H1 (cell line): ENCODE measurements at regions of chr1 and their contacts with region 1.

Region 1: DNA sequence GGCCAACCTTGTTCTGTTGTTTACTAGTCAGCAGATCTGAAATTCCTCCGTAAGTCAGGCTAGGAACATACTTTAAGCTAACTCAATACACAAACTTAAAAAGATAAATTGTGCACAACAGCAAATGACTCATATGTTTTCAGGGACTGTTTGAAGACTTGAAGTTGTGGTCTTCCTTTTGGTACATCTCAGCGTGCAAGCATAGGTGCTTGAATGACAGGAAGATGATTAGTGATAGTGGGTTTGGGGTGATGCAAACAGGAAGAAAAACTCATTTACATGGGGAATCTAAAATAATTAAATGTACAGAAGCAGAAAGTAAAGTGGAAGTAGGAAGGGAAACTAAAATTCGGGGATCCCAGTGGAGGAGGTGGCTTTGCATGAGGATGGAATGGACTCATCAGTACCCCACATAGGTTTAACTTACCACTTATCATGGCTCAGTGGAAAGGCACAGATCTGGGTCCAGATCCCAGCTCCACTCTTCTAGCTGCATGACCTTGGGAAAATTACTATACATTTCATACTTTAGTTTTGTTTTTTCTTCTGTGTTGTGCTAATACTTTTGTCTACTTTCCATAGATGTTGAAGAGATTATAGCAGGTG is 122.3 kb downstream of the XCL2 start:
- DNase-seq: no peak
- H3K4me3 ChIP-seq: no peak overlapping the region
- H3K27ac ChIP-seq: no peak overlapping the region
- H3K4me1 ChIP-seq: no peaks in the 10 kb centered on the region
- H3K27me3 ChIP-seq: no peaks in the 10 kb centered on the region
- CTCF ChIP-seq: no peak
- EP300 ChIP-seq: no peak
- POLR2A ChIP-seq: no peak
- RAD21 ChIP-seq: no peak

Region 2: GRCh38 chr1:168373869-168374268 is 47.6 kb before region 1 on chr1:
- CTCF ChIA-PET with region 1: no interaction called
- POLR2A ChIA-PET with region 1: no interaction called
- DNase-seq: no peak
- H3K4me3 ChIP-seq: no peak overlapping the region
- H3K27ac ChIP-seq: no peak overlapping the region
- H3K4me1 ChIP-seq: no peaks in the 10 kb centered on the region
- H3K27me3 ChIP-seq: no peaks in the 10 kb centered on the region
- CTCF ChIP-seq: no peak
- EP300 ChIP-seq: no peak
- POLR2A ChIP-seq: no peak
- RAD21 ChIP-seq: no peak

Region 3: DNA sequence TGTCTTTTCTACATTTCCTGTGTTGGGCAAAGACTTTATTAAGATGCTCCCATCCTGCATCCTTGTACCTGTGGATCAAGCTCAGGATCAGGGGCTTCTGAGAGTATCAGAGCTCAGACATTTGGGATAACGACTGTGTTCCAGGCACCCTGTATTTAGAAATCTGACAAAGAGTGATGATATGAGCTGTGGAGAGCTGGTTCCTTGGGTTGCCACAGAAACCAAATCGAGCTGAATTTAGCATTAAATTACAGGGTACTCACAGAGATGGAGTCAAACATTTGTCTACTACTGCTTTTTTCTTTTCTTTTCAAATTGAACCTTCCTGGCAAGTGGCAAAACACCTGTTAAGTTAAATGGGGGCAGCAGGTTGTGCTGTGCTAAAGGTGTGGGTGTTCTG is 11.7 kb after region 1 on chr1:
- CTCF ChIA-PET with region 1: interaction called, 43 read pairs
- POLR2A ChIA-PET with region 1: no interaction called
- DNase-seq: no peak
- H3K4me3 ChIP-seq: no peak overlapping the region
- H3K27ac ChIP-seq: no peak overlapping the region
- H3K4me1 ChIP-seq: peaks cover 0 to 3% (median 2%) of the 10 kb centered on the region in 4 experiments; a peak in 4 of 7 replicates
- H3K27me3 ChIP-seq: no peaks in the 10 kb centered on the region; a peak in 1 of 7 replicates
- CTCF ChIP-seq: no peak
- EP300 ChIP-seq: no peak
- POLR2A ChIP-seq: no peak
- RAD21 ChIP-seq: no peak